Mammary epithelial cell (primary cell): ENCODE measurements at regions of chr1 and their contacts with region 1.

Region 1: DNA sequence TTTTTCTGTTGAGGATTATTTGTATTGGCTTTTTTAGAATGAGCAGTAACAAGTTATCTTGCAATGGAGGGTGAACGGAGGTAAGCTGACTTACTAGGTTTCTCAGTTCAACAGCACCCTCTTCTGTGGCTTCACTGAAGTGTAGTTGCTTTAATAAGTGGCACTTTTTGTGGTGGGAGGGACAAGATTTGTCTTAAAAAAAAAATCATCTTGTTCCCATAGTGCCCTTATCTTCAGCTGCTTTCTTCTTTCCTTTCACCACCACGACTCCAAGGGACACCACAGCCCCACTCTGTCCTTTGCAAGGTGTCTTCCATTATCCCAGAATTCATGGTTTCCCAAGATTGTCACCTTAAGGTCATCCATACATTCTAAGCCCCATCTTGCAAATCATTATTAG is 92.9 kb downstream of the PIGK start:
- DNase-seq: peak; percentile 51
- H3K4me3 ChIP-seq: no peak overlapping the region
- H3K27ac ChIP-seq: no peak overlapping the region
- H3K4me1 ChIP-seq: no peaks in the 10 kb centered on the region
- H3K27me3 ChIP-seq: no peaks in the 10 kb centered on the region
- CTCF ChIP-seq: peak; percentile 61 to 76

Region 2: GRCh38 chr1:75908717-75909152 is 1217.6 kb before region 1 on chr1:
- CTCF ChIA-PET with region 1: no interaction called
- dilution Hi-C with region 1: no loop called
- in situ Hi-C with region 1: no loop called
- intact Hi-C with region 1: loop called (anchors 5 kb)
- DNase-seq: peak; percentile 53
- H3K4me3 ChIP-seq: no peak overlapping the region
- H3K27ac ChIP-seq: no peak overlapping the region
- H3K4me1 ChIP-seq: no peaks in the 10 kb centered on the region
- H3K27me3 ChIP-seq: no peaks in the 10 kb centered on the region
- CTCF ChIP-seq: peak; percentile 49 to 74

Region 3: DNA sequence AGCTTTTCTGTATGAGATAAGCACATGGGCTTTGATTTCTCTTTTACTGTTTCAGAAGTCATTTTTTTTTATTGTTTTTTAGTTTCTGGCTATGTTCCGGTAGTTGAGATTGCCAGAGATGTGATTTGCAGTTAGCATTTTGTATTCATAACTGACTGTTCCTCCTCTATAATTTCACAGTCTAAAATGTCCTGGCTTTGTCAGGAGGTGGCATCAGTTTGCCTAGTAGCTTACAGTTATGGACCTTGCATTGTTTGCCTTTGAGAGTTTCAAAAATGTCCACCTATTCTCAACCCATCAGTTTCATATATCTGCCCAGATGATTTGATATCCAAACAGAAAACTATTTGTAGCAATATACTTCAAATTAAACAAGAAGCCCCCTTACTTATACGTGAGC is 1091.3 kb before region 1 on chr1:
- CTCF ChIA-PET with region 1: no interaction called
- dilution Hi-C with region 1: no loop called
- in situ Hi-C with region 1: no loop called
- intact Hi-C with region 1: loop called (anchors 5 kb)
- DNase-seq: no peak
- H3K4me3 ChIP-seq: no peak overlapping the region
- H3K27ac ChIP-seq: no peak overlapping the region
- H3K4me1 ChIP-seq: no peaks in the 10 kb centered on the region
- H3K27me3 ChIP-seq: peaks cover 1% of the 10 kb centered on the region
- CTCF ChIP-seq: peak in 1 of 2 donors; percentile 38

Region 4: DNA sequence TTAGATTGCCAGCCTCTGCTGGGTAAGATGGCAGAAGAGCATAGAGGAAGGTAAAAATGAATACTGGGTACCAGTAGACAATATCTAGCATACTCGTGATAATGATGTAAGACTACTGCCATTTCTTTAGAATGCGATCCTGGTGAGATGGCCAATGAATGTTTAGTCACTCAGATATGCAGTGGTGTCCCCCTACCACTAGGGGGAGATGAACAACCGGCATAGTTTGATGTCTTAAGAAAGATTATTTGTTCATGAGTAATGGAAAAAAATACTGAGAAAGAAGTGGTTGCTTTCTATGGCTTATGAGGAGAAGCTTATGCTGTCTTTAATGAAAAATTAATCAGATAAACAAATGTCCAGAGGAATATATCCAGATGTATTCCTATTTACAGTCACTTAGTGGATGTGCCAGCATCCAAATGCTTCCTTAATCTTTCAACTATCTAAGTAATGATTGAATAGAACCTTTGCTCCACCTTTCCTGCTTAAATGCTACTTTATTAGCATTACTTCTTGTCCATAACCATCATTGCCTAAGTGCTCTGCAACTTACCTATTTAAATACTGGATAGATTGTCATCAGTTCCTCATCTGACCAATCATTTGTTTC is 795.2 kb before region 1 on chr1:
- CTCF ChIA-PET with region 1: no interaction called
- dilution Hi-C with region 1: no loop called
- in situ Hi-C with region 1: loop called (anchors 25 kb)
- intact Hi-C with region 1: loop called (anchors 1 kb)
- DNase-seq: peak; percentile 46
- H3K4me3 ChIP-seq: no peak overlapping the region
- H3K27ac ChIP-seq: no peak overlapping the region
- H3K4me1 ChIP-seq: no peaks in the 10 kb centered on the region
- H3K27me3 ChIP-seq: no peaks in the 10 kb centered on the region
- CTCF ChIP-seq: peak; percentile 86 to 97

Region 5: GRCh38 chr1:76901158-76901767 is 225.0 kb before region 1 on chr1:
- CTCF ChIA-PET with region 1: no interaction called
- dilution Hi-C with region 1: no loop called
- in situ Hi-C with region 1: loop called (anchors 10 to 25 kb)
- intact Hi-C with region 1: loop called (anchors 1 kb)
- DNase-seq: peak; percentile 60
- H3K4me3 ChIP-seq: no peak overlapping the region
- H3K27ac ChIP-seq: no peak overlapping the region
- H3K4me1 ChIP-seq: no peaks in the 10 kb centered on the region
- H3K27me3 ChIP-seq: no peaks in the 10 kb centered on the region
- CTCF ChIP-seq: peak; percentile 88 to 95

Region 6: GRCh38 chr1:77781683-77782082 is 655.4 kb after region 1 on chr1:
- CTCF ChIA-PET with region 1: no interaction called
- dilution Hi-C with region 1: no loop called
- in situ Hi-C with region 1: no loop called
- intact Hi-C with region 1: no loop called
- DNase-seq: no peak
- H3K4me3 ChIP-seq: no peak overlapping the region
- H3K27ac ChIP-seq: no peak overlapping the region
- H3K4me1 ChIP-seq: no peaks in the 10 kb centered on the region
- H3K27me3 ChIP-seq: no peaks in the 10 kb centered on the region
- CTCF ChIP-seq: no peak